ENCODE measurements at regions of chr1 and their contacts with region 1.

Region 1: DNA sequence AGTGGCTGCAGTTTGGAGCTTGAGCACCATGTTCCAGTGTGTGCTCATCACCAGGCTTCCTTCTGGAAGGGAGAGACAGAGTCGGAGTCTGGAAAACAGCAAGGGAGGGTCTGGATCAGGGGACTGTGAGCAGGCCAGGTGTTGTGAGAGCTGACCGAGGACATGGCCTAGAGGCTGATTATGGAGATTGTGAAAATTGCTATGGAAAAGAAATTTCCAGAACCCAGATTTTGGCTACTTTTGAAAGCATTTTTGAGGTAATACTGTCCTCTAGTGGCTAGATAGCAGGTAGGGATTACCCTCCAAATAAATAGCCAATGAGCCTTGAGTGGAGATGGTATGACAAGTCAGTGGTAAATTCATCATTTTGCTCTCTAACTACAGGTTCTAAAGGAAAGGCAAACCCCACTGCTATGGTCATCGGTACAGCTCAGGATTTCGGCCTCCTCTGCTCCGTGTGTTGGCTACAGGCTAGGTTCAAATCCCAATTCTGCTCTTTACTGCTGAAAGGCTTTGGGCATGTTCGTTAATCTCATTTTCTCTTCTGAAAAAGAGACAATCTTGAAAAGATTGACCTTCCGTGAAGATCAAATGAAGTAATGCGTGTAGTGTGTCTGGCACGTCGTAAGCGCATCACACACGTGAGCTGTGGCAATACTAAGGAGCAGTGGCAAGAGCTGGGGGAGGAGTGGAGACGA is 1.0 kb upstream of the HAO2 start:
- DNase-seq: no peak
- H3K4me3 ChIP-seq: no peak overlapping the region
- H3K27ac ChIP-seq: no peak overlapping the region
- H3K4me1 ChIP-seq: no peaks in the 10 kb centered on the region
- H3K27me3 ChIP-seq: no peaks in the 10 kb centered on the region
- CTCF ChIP-seq: peak; percentile 52 to 80 (median 63)
- EP300 ChIP-seq: no peak
- POLR2A ChIP-seq: no peak

Region 2: GRCh38 chr1:119188926-119189325 is 178.7 kb before region 1 on chr1:
- intact Hi-C with region 1: no loop called
- DNase-seq: no peak
- H3K4me3 ChIP-seq: no peak overlapping the region
- H3K27ac ChIP-seq: no peak overlapping the region
- H3K4me1 ChIP-seq: no peaks in the 10 kb centered on the region
- H3K27me3 ChIP-seq: no peaks in the 10 kb centered on the region
- CTCF ChIP-seq: no peak
- EP300 ChIP-seq: no peak
- POLR2A ChIP-seq: no peak

Region 3: GRCh38 chr1:119254067-119254720 is 113.4 kb before region 1 on chr1:
- intact Hi-C with region 1: no loop called
- DNase-seq: no peak
- H3K4me3 ChIP-seq: no peak overlapping the region
- H3K27ac ChIP-seq: no peak overlapping the region
- H3K4me1 ChIP-seq: no peaks in the 10 kb centered on the region
- H3K27me3 ChIP-seq: no peaks in the 10 kb centered on the region
- CTCF ChIP-seq: no peak
- EP300 ChIP-seq: no peak
- POLR2A ChIP-seq: no peak

Region 4: GRCh38 chr1:119275145-119276134 is 92.1 kb before region 1 on chr1:
- intact Hi-C with region 1: loop called in 2 of 4 experiments (anchors 5 to 10 kb)
- DNase-seq: peak in 4 of 5 donors; percentile 21 to 52 (median 39)
- H3K4me3 ChIP-seq: no peak overlapping the region
- H3K27ac ChIP-seq: no peak overlapping the region
- H3K4me1 ChIP-seq: peaks cover 3% of the 10 kb centered on the region
- H3K27me3 ChIP-seq: no peaks in the 10 kb centered on the region
- CTCF ChIP-seq: peak in 2 of 3 donors; percentile 36 to 45
- EP300 ChIP-seq: no peak
- POLR2A ChIP-seq: no peak

Region 5: DNA sequence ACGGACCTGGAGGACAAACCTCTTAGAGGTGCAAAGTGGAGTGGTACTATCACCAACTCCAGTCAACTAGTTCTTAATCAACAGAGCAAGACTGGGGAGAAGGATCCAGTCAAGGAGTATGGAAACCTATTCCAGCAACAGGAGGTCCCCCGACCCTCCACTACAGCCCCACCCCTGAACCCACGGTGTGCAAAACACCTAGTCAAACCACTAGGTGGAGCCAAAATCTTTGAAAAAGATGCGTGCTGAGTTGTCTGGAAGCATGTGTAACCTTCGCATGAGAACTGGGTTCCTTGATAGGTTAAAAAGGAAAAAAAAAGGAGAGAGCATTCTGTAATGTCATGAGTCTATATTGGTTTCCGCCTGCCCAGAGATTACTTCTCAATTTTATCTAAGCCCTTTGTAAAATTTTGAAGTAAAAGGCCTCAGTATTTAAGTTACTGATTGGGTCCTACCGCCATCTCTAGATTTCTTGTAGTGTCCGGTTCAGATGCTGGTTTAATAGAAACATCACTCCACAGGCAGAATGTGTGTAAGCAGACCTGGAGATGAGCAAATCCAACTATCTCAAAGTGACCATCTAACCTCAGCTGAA is 80.9 kb before region 1 on chr1:
- intact Hi-C with region 1: loop called in 1 of 4 experiments (anchors 5 kb)
- DNase-seq: no peak
- H3K4me3 ChIP-seq: no peak overlapping the region
- H3K27ac ChIP-seq: no peak overlapping the region
- H3K4me1 ChIP-seq: no peaks in the 10 kb centered on the region
- H3K27me3 ChIP-seq: no peaks in the 10 kb centered on the region
- CTCF ChIP-seq: no peak
- EP300 ChIP-seq: no peak
- POLR2A ChIP-seq: no peak